Mammary epithelial cell (primary cell): ENCODE measurements at regions of chr3 and their contacts with region 1.

Region 1: DNA sequence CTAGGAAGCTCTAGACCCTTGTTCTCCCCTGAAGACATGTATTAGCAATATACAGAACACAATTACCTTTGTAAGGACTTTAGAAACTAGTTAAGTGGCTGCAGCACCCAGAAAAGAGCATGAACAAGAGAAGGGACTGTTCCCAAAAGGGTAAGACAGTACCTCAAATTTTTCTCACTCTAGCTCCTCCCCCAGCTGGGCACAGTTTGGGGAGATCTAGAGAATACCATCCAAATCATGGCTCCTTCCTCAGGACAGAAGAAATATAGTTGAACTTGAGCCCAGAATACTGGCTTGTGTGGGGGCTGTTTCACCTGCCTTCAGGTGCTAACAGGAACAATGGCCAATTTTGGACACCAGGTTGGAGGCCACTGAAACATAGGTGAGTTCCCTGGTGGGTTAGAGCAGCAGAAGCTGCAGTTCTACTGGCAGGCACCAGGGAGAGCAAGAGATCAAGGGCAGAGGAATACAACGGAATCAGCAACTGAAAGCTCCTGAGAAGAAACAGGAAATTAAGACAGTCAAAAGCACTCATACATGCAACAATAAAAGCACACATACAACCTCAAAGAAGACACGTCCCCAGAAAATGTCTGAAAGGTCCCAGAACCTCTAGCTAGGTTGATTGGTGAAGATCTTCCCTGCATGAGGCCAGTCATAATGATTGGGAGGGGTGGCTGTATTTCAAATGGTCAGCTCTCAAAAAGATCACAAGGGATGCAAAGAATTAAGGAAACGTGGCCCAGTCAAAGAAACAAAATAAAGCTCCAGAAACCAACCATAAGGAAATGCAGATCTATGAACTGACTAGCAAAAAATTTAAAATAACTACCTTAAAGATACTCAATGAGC is 104.9 kb upstream of the ASB14 start:
- DNase-seq: peak; percentile 51
- H3K4me3 ChIP-seq: no peak overlapping the region
- H3K27ac ChIP-seq: no peak overlapping the region
- H3K4me1 ChIP-seq: no peaks in the 10 kb centered on the region
- H3K27me3 ChIP-seq: no peaks in the 10 kb centered on the region
- CTCF ChIP-seq: peak; percentile 93 to 97

Region 2: GRCh38 chr3:57169872-57170623 is 227.4 kb before region 1 on chr3:
- CTCF ChIA-PET with region 1: no interaction called
- dilution Hi-C with region 1: no loop called
- in situ Hi-C with region 1: no loop called
- intact Hi-C with region 1: no loop called
- DNase-seq: peak; percentile 48
- H3K4me3 ChIP-seq: peak overlapping the region; percentile 35 to 44 (median 41)
- H3K27ac ChIP-seq: no peak overlapping the region
- H3K4me1 ChIP-seq: peaks cover 5% of the 10 kb centered on the region
- H3K27me3 ChIP-seq: no peaks in the 10 kb centered on the region
- CTCF ChIP-seq: peak; percentile 46 to 79

Region 3: GRCh38 chr3:57315696-57316095 is 81.7 kb before region 1 on chr3:
- CTCF ChIA-PET with region 1: no interaction called
- dilution Hi-C with region 1: loop called (anchors 5 kb)
- in situ Hi-C with region 1: no loop called
- intact Hi-C with region 1: no loop called
- DNase-seq: no peak
- H3K4me3 ChIP-seq: no peak overlapping the region
- H3K27ac ChIP-seq: no peak overlapping the region
- H3K4me1 ChIP-seq: no peaks in the 10 kb centered on the region
- H3K27me3 ChIP-seq: peaks cover 3% of the 10 kb centered on the region
- CTCF ChIP-seq: no peak

Region 4: GRCh38 chr3:57451150-57451846 is 53.9 kb after region 1 on chr3:
- CTCF ChIA-PET with region 1: no interaction called
- dilution Hi-C with region 1: loop called (anchors 5 kb)
- in situ Hi-C with region 1: no loop called
- intact Hi-C with region 1: no loop called
- DNase-seq: no peak
- H3K4me3 ChIP-seq: no peak overlapping the region
- H3K27ac ChIP-seq: no peak overlapping the region
- H3K4me1 ChIP-seq: no peaks in the 10 kb centered on the region
- H3K27me3 ChIP-seq: peaks cover under 1% of the 10 kb centered on the region
- CTCF ChIP-seq: no peak

Region 5: DNA sequence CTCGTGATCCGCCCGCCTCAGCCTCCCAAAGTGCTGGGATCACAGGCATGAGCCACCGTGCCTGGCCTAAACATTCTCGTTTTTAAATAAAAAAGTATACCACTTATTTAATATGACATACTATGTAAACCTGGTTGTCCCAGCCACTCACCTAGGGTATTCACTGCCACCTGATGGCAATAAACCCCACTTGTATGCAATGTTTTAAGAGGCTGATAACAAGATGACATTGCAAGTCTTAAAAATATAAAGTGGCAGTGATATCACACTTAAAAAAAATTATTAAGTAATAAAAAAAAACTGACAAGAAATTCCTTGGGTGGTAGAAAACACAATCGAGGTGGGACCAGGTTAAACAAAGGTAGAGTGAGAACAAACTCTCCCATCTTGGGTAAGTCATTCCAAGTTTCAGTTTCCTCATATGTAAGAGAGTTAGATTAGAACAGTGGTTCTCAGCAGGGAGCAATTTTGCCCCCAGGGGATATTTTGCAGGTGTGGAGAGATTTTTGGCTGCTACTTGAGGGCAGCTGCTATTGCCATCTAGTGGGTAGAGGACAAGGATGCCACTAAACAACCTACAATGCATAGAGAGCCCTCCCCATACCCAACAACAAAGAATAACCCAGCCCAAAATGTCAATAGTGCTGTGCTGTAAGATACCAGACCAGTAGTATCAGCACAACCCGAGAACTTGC is 185.2 kb after region 1 on chr3:
- CTCF ChIA-PET with region 1: no interaction called
- dilution Hi-C with region 1: no loop called
- in situ Hi-C with region 1: no loop called
- intact Hi-C with region 1: loop called (anchors 2 kb)
- DNase-seq: peak; percentile 79
- H3K4me3 ChIP-seq: no peak overlapping the region
- H3K27ac ChIP-seq: peak overlapping the region; percentile 59
- H3K4me1 ChIP-seq: peaks cover 7% of the 10 kb centered on the region
- H3K27me3 ChIP-seq: no peaks in the 10 kb centered on the region
- CTCF ChIP-seq: peak; percentile 35 to 69

Region 6: GRCh38 chr3:57889807-57890206 is 492.4 kb after region 1 on chr3:
- CTCF ChIA-PET with region 1: no interaction called
- dilution Hi-C with region 1: no loop called
- in situ Hi-C with region 1: no loop called
- intact Hi-C with region 1: no loop called
- DNase-seq: peak; percentile 5
- H3K4me3 ChIP-seq: peak overlapping the region in 1 of 3 experiments; percentile 23
- H3K27ac ChIP-seq: no peak overlapping the region
- H3K4me1 ChIP-seq: peaks cover 3% of the 10 kb centered on the region
- H3K27me3 ChIP-seq: no peaks in the 10 kb centered on the region
- CTCF ChIP-seq: no peak

Region 7: GRCh38 chr3:57910988-57911387 is 513.6 kb after region 1 on chr3:
- CTCF ChIA-PET with region 1: no interaction called
- dilution Hi-C with region 1: no loop called
- in situ Hi-C with region 1: no loop called
- intact Hi-C with region 1: loop called (anchors 10 kb)
- DNase-seq: no peak
- H3K4me3 ChIP-seq: no peak overlapping the region
- H3K27ac ChIP-seq: no peak overlapping the region
- H3K4me1 ChIP-seq: no peaks in the 10 kb centered on the region
- H3K27me3 ChIP-seq: no peaks in the 10 kb centered on the region
- CTCF ChIP-seq: peak; percentile 39 to 48